Naive thymus-derived CD4-positive, alpha-beta T cell (primary cell): ENCODE measurements at regions of chr1 and their contacts with region 1.

Region 1: DNA sequence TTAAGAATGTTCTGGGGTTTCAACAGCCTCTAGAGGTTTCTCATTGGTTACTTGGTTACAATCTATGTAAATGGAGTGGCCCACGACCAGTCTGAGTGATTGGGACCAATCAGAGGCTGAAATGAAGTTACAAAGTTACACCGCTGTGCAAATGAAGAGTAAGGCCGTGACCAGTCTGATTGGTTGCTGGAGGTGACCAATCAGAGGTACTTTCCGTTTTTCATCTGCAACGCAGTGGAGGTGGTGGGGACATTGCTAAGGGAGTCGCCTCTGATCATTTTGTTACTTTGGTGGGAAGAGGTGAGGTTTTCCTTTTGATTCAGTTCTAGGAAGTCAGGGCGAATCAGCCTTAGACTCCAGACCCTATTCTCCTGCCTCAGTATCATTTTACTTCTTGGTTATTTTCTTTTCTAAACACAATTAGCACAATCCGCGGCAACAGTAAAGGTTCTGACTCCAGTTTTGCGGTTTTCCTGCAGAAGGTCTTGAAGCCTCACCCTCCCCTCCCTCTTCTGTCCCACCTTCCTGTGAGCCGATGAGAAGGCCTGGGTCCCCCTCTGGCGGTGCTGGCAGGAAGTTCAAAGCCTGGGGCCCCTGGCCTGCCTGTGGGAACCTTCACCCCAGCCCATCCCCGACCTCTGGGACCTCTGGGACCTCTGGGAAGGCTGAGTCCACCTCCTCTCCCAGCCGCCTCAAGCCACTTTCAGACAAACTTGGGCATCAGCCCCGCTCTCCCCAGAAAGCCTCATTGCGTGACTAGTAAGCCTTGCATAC is 38.7 kb upstream of the TTC34 start:
- DNase-seq: peak in 8 of 9 donors; percentile 43 to 87 (median 82)
- ATAC-seq: peak; percentile 89
- H3K4me3 ChIP-seq: peak overlapping the region; percentile 31
- H3K4me3 Mint-ChIP-seq: peak overlapping the region; percentile 49 to 88 (median 78)
- H3K27ac ChIP-seq: peak overlapping the region; percentile 60
- H3K27ac Mint-ChIP-seq: peak overlapping the region; percentile 40 to 92 (median 90)
- H3K4me1 ChIP-seq: peaks cover 10 to 17% of the 10 kb centered on the region in 2 donors
- H3K4me1 Mint-ChIP-seq: peaks cover 11 to 24% (median 23%) of the 10 kb centered on the region in 7 donors
- H3K27me3 ChIP-seq: no peaks in the 10 kb centered on the region
- H3K27me3 Mint-ChIP-seq: peaks cover 0 to 4% (median 0%) of the 10 kb centered on the region in 5 donors

Region 2: DNA sequence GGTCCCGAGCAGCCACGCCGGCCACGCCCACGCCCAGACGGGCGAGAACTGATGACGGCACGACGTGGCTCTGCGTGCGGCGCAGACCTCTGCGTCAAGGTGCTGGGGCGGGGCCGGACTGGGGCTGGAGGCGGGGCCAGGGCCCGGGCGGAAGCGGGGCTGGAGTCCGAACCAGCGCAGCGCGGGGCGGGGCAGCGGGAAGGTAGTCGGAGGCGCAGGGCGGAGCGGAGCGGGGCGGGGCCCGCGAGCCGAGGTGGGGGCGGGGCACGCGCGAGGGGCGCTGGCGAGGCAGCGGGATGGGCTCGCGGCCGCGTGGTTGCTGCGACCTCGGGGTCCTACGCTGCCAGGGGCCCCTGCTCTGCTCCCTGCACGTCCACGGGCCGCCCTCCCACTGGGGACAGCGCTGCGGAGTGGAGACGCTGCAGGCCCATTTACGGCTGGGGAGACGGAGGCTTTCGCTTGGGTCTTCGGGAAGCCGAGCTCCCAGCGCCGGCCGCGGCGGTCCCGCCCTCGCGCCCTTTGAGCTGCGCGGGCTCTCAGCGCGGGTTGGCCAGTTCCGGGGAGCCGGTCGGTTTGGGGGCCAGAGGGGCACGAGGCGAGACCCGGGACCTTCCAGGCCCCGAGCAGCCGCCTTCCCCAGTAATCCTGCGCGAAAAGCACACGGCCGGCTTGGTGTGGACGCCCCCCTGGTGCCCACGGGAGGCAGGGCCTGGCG is 427.5 kb before region 1 on chr1 and contains the start of gene PEX10:
- CTCF ChIA-PET with region 1: no interaction called
- POLR2A ChIA-PET with region 1: no interaction called
- intact Hi-C with region 1: loop called (anchors 1 kb)
- DNase-seq: peak; percentile 95 to 100 (median 98)
- ATAC-seq: peak; percentile 97
- H3K4me3 ChIP-seq: peak within 1 kb of the TSS; percentile 71
- H3K4me3 Mint-ChIP-seq: peak within 1 kb of the TSS; percentile 83 to 91 (median 86)
- H3K27ac ChIP-seq: peak within 1 kb of the TSS; percentile 95
- H3K27ac Mint-ChIP-seq: peak within 1 kb of the TSS; percentile 31 to 94 (median 87)
- H3K4me1 ChIP-seq: peaks cover 37 to 45% of the 10 kb centered on the region in 2 donors
- H3K4me1 Mint-ChIP-seq: peaks cover 27 to 45% (median 35%) of the 10 kb centered on the region in 7 donors
- H3K27me3 ChIP-seq: no peaks in the 10 kb centered on the region
- H3K27me3 Mint-ChIP-seq: no peaks in the 10 kb centered on the region
- total RNA-seq, gene PEX10: 8.7 to 14.9 (median 12.3) TPM

Region 3: GRCh38 chr1:2575801-2576663 is 264.2 kb before region 1 on chr1:
- CTCF ChIA-PET with region 1: no interaction called
- POLR2A ChIA-PET with region 1: no interaction called
- intact Hi-C with region 1: loop called in 1 of 2 experiments (anchors 1 kb)
- DNase-seq: no peak
- ATAC-seq: no peak
- H3K4me3 ChIP-seq: no peak overlapping the region
- H3K4me3 Mint-ChIP-seq: peak overlapping the region in 3 of 10 donors; percentile 25 to 76 (median 35)
- H3K27ac ChIP-seq: peak overlapping the region; percentile 8
- H3K27ac Mint-ChIP-seq: peak overlapping the region in 7 of 9 donors; percentile 43 to 96 (median 62)
- H3K4me1 ChIP-seq: peaks cover 20 to 33% of the 10 kb centered on the region in 2 donors
- H3K4me1 Mint-ChIP-seq: peaks cover 23 to 59% (median 48%) of the 10 kb centered on the region in 7 donors
- H3K27me3 ChIP-seq: no peaks in the 10 kb centered on the region
- H3K27me3 Mint-ChIP-seq: no peaks in the 10 kb centered on the region

Region 4: DNA sequence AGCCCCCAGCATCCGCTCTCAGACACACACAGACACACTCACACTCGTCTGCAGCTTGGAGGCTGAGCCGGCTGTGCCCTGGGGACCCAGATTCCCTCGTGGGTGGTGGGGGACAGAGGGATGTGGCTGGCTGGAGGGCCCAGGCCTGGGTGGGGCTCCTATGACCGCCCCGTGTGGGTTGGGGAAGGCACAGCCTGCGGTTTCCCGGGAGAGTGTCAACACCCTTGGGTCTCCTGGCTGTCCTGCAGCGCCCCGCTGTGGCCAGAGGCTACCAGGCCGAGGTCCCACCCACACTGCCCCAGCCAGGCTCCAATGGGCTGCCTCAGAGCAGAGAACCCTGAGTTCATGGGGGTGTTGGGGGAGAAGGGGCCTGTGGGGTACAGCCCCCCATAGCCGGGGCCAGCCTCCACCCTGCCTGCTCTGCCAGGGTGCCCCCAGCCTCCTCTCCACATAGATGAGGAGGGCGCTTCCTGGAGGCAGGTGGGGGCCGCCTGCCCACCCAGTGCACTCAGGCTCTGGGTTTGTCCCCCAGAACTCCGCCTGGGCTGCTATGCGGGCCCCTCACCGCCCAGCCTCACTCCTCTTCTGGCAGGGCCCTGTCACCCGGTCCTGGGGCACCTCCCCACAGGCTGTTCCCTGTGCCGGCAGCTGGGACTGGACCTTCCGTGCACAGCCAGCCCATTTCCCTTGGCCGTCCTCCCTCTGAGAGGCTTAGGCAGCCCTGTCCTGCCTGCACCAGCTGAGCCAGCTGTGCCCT is 38.5 kb before region 1 on chr1 and contains the start of gene TTC34:
- CTCF ChIA-PET with region 1: no interaction called
- POLR2A ChIA-PET with region 1: no interaction called
- intact Hi-C with region 1: loop called in 1 of 2 experiments (anchors 1 kb)
- DNase-seq: peak in 7 of 9 donors; percentile 22 to 54 (median 33)
- ATAC-seq: peak; percentile 78
- H3K4me3 ChIP-seq: no peak within 1 kb of the TSS
- H3K4me3 Mint-ChIP-seq: no peak within 1 kb of the TSS
- H3K27ac ChIP-seq: no peak within 1 kb of the TSS
- H3K27ac Mint-ChIP-seq: peak within 1 kb of the TSS in 1 of 9 donors; percentile 60
- H3K4me1 ChIP-seq: no peaks in the 10 kb centered on the region
- H3K4me1 Mint-ChIP-seq: peaks cover 0 to 3% (median 0%) of the 10 kb centered on the region in 7 donors
- H3K27me3 ChIP-seq: no peaks in the 10 kb centered on the region
- H3K27me3 Mint-ChIP-seq: peaks cover 2 to 15% (median 9%) of the 10 kb centered on the region in 5 donors
- total RNA-seq, gene TTC34: 1.6 to 8.0 (median 2.3) TPM

Region 5: GRCh38 chr1:3031401-3032221 is 191.4 kb after region 1 on chr1:
- CTCF ChIA-PET with region 1: no interaction called
- POLR2A ChIA-PET with region 1: no interaction called
- intact Hi-C with region 1: no loop called
- DNase-seq: peak in 1 of 9 donors; percentile 6
- ATAC-seq: no peak
- H3K4me3 ChIP-seq: no peak overlapping the region
- H3K4me3 Mint-ChIP-seq: peak overlapping the region in 2 of 10 donors; percentile 56 to 59
- H3K27ac ChIP-seq: no peak overlapping the region
- H3K27ac Mint-ChIP-seq: peak overlapping the region in 2 of 9 donors; percentile 67 to 85
- H3K4me1 ChIP-seq: peaks cover 0 to 26% of the 10 kb centered on the region in 2 donors
- H3K4me1 Mint-ChIP-seq: peaks cover 5 to 35% (median 21%) of the 10 kb centered on the region in 7 donors
- H3K27me3 ChIP-seq: no peaks in the 10 kb centered on the region
- H3K27me3 Mint-ChIP-seq: peaks cover 0 to 2% (median 0%) of the 10 kb centered on the region in 5 donors